Posterior vena cava (tissue), 2 donors: ENCODE measurements at regions of chr5 and their contacts with region 1.

Region 1: DNA sequence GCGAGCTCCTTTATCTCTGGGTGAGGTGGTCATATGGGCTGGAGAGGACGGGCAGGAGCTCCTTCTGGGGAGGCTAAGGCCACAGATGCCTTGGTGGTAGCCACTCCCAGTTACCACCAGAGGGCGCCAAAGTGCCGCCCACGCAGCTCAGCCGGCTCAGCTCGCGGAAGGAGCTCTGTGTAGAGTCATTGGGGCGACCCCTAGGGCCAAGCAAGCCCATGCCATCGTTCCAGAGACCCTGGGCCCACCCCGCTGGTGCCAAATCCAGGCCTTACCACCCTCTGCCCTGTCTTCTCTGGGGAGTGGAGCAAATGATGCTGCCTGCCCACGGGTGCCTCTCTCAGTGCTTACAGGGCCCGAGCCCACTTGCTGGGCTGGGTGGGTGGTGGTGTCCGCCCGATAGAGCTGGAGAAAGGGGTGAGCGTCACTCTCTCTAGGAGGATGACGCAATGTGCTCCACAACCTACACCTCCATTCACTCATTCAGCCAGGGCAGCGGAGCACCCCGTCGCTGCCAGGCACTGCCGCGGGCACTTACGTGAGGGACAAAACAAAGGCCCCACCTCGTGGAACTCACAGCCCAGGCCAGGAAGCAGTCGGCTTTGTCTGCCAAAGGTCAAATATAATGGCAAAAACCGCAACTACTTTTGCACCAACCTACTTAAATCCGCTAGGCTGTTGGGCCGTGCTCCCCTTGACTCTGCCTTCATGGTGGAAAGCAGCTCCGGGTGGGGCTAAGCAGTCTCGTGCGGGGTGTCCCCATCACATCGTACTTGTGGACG is 13.8 kb downstream of the TSPAN17 start:
- DNase-seq: peak; percentile 93

Region 2: GRCh38 chr5:176959051-176959450 is 298.0 kb after region 1 on chr5:
- intact Hi-C with region 1: loop called in 1 of 2 experiments (anchors 10 kb)
- DNase-seq: no peak